ENCODE measurements at regions of chr7 and their contacts with region 1.

Region 1: DNA sequence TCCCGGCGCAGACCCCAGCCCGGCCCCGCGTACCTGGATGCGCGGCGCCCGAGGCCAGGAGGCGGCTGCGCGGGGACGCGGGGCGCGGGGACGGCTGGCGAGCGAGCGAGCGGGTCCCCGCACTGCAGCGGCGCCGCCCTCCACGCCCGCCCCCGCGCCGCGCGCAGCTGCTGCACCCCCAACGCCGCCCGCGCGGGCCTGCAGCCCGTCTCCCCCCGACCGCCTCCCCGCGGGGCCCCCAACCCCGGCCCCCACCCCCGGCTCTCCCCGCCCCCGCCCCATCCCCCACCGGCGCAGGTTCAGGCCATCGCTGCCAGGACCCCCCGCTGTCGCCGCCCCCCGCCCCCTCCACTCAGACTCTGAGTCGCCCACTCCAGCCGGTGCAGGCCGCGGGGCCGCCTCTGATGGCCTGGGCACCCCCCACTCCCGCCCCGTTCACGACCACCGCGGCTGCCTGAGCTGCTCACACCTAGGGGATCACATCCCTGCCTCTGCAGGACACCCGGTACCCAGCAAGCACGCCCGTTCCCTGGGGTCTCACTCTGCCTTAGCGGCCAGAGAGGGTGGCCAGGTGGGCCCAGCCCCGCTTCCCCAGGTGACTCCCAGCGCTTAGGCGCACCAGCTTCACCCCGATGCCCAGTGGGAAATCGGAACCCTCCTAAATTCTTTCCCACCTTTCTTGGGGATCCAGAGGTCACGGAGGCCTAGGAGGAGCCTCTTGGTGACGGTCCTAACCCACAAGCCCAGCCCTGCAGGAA is 13.9 kb upstream of the DNAAF5 start:
- DNase-seq: peak; percentile 64
- H3K4me3 ChIP-seq: peak overlapping the region; percentile 43 to 91 (median 72)
- H3K27ac ChIP-seq: peak overlapping the region in 2 of 4 donors; percentile 56 to 63
- H3K4me1 ChIP-seq: peaks cover 0 to 17% (median 10%) of the 10 kb centered on the region in 4 donors
- H3K27me3 ChIP-seq: no peaks in the 10 kb centered on the region
- CTCF ChIP-seq: no peak
- EP300 ChIP-seq: no peak
- POLR2A ChIP-seq: no peak

Region 2: GRCh38 chr7:674454-675410 is 37.8 kb before region 1 on chr7:
- intact Hi-C with region 1: loop called (anchors 5 kb)
- DNase-seq: peak; percentile 93
- H3K4me3 ChIP-seq: no peak overlapping the region
- H3K27ac ChIP-seq: peak overlapping the region; percentile 77 to 93 (median 78)
- H3K4me1 ChIP-seq: peaks cover 0 to 16% (median 4%) of the 10 kb centered on the region in 4 donors
- H3K27me3 ChIP-seq: no peaks in the 10 kb centered on the region
- CTCF ChIP-seq: no peak
- EP300 ChIP-seq: peak in 3 of 4 donors; percentile 96 to 100 (median 97)
- POLR2A ChIP-seq: no peak